CD8-positive, alpha-beta T cell (primary cell): ENCODE measurements at regions of chr9 and their contacts with region 1.

Region 1: DNA sequence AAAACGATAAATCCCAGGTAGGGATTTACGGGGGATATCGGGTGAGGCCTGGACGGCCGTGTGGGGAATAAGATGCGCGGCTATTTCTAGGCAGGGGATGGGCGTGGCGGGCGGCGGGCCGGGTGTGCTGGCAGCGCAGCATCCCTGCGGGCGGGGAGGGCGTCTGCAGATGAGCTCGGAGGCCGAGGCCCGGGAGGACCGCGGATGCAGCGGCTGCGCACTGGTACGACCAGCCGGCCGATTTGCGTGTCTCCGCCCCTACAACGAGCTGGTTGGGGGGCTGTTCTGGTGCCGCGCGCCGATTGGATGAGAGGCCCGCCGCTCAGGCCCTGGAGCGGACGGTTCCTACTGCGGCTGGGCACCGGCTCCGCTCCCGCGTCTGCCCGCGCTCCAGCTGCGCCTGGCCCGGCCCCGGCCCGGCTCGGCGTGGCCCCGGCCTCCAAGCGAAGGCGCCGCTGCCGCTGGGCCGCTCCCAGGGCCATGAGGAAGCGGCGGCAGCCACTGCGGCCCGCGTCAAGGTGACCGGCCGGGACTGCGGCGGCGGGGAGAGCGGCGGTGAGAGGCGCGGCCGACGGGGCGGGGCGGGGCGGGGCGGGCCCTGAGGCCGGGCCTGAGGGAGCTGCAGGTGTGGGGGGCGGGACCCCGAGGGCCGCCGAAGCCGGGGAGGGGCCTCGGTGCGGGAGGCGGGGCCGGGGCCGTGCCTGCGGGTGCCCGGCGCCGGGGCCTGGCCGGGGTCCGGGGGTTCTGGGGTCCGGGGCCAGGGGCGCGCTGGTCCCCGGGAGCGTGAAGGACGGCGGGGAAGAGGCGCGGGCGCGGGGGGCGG is at the start of gene RALGPS1:
- DNase-seq: peak; percentile 77 to 95 (median 86)
- ATAC-seq: peak; percentile 88
- H3K4me3 ChIP-seq: peak within 1 kb of the TSS; percentile 33 to 40
- H3K4me3 Mint-ChIP-seq: peak within 1 kb of the TSS; percentile 83
- H3K27ac ChIP-seq: no peak within 1 kb of the TSS
- H3K27ac Mint-ChIP-seq: no peak within 1 kb of the TSS
- H3K4me1 ChIP-seq: peaks cover 7% of the 10 kb centered on the region
- H3K4me1 Mint-ChIP-seq: peaks cover 8% of the 10 kb centered on the region
- H3K27me3 ChIP-seq: no peaks in the 10 kb centered on the region
- H3K27me3 Mint-ChIP-seq: no peaks in the 10 kb centered on the region
- CTCF ChIP-seq: no peak
- total RNA-seq, gene RALGPS1: 4.9 to 5.4 TPM

Region 2: DNA sequence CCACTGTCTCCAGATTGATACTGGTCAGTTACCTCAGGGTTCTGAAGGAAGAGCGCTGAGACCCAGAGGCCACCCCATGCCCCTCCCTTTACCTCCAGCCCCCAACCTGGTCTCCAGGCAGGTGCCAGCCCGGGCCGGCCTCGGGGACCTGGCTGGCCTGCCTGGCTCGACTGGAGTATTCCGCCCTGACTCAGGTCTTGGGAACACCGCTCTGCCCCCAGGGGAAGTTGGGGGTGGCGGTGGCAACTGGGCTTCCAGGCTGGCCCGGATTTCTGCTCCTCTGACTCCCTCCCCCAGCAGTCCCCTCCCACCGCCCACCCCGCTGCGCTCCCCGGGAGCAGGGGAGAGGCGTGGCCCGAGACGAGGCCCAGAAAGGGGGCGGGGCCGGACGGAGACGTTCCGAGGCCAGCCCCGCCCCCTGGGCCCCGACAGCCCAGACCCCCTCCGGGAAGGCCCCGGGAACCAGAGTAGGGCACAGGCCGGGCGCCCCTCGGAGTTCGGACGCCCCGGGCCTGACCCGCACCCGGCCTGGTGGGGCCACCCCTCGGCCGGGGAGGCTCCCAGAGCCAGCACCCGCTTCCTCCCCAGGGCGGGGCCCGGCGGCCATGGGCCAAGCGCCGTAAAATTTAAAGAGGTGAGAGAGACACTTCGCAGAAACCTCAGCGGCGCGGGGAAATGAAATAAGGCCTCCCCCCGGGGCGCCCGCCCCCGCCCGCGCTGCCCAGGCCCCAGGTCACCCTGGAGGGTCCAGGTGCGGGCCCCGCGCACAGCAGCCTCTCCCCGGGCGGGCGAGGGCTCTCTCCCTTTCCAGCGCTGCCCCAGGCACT is 192.2 kb before region 1 on chr9:
- CTCF ChIA-PET with region 1: no interaction called
- POLR2A ChIA-PET with region 1: no interaction called
- intact Hi-C with region 1: loop called in 1 of 2 experiments (anchors 10 kb)
- DNase-seq: peak; percentile 66 to 94 (median 90)
- ATAC-seq: peak; percentile 66
- H3K4me3 ChIP-seq: peak overlapping the region; percentile 65 to 92
- H3K4me3 Mint-ChIP-seq: peak overlapping the region; percentile 90
- H3K27ac ChIP-seq: peak overlapping the region; percentile 87 to 99
- H3K27ac Mint-ChIP-seq: peak overlapping the region; percentile 95
- H3K4me1 ChIP-seq: peaks cover 44% of the 10 kb centered on the region
- H3K4me1 Mint-ChIP-seq: peaks cover 53% of the 10 kb centered on the region
- H3K27me3 ChIP-seq: no peaks in the 10 kb centered on the region
- H3K27me3 Mint-ChIP-seq: no peaks in the 10 kb centered on the region
- CTCF ChIP-seq: no peak

Region 3: GRCh38 chr9:126804696-126805545 is 109.7 kb before region 1 on chr9 and contains the start of gene ZBTB43:
- CTCF ChIA-PET with region 1: no interaction called
- POLR2A ChIA-PET with region 1: interaction called, 3 read pairs
- intact Hi-C with region 1: loop called in 1 of 2 experiments (anchors 1 kb)
- DNase-seq: peak; percentile 97 to 99 (median 99)
- ATAC-seq: peak; percentile 82
- H3K4me3 ChIP-seq: peak within 1 kb of the TSS; percentile 83 to 85
- H3K4me3 Mint-ChIP-seq: peak within 1 kb of the TSS; percentile 98
- H3K27ac ChIP-seq: peak within 1 kb of the TSS; percentile 87 to 93
- H3K27ac Mint-ChIP-seq: peak within 1 kb of the TSS; percentile 99
- H3K4me1 ChIP-seq: peaks cover 32% of the 10 kb centered on the region
- H3K4me1 Mint-ChIP-seq: peaks cover 43% of the 10 kb centered on the region
- H3K27me3 ChIP-seq: no peaks in the 10 kb centered on the region
- H3K27me3 Mint-ChIP-seq: no peaks in the 10 kb centered on the region
- CTCF ChIP-seq: no peak
- total RNA-seq, gene ZBTB43: 55.7 to 65.0 TPM

Region 4: DNA sequence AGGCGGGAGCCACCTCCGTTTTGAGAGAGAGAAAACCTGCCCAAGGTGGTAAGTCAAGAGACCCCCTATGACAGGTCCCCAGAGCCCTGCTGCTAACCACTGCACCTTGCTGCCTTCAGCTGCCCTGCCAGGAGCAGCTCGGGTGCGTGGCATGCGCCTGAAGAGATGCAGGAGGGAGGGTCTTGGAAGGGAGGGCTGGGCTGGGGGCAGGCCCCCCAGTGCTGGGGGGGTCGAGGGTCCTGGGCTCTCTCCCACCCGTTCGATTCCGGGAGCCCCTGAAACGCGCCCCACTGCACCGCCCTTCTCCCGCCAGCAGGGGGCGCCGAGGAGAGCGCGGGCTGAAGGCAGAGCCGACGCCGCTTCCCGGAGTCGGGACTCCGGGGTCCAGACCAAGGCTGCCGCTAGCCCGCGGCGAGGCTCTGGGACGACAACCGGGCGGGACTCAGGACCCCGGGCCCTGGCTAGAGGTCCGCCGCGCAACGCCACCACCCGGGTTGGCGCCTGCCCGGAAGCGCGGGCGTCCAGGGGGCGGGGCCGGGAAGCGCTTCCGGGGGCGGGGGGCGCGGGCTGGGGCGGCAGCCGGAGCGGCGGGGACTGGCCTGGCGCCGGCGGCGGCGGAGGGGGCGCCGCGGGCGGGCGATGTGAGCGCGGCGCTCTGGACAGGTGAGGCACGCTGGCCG is 54.5 kb before region 1 on chr9 and contains the start of gene ZBTB34:
- CTCF ChIA-PET with region 1: interaction called, 4 read pairs
- POLR2A ChIA-PET with region 1: no interaction called
- intact Hi-C with region 1: loop called (anchors 1 to 2 kb)
- DNase-seq: peak; percentile 59 to 90 (median 76)
- ATAC-seq: peak; percentile 84
- H3K4me3 ChIP-seq: peak within 1 kb of the TSS; percentile 71 to 74
- H3K4me3 Mint-ChIP-seq: peak within 1 kb of the TSS; percentile 86
- H3K27ac ChIP-seq: peak within 1 kb of the TSS; percentile 57 to 76
- H3K27ac Mint-ChIP-seq: peak within 1 kb of the TSS; percentile 91
- H3K4me1 ChIP-seq: peaks cover 30% of the 10 kb centered on the region
- H3K4me1 Mint-ChIP-seq: peaks cover 30% of the 10 kb centered on the region
- H3K27me3 ChIP-seq: no peaks in the 10 kb centered on the region
- H3K27me3 Mint-ChIP-seq: peaks cover 2% of the 10 kb centered on the region
- CTCF ChIP-seq: peak; percentile 99
- total RNA-seq, gene ZBTB34: 3.0 to 3.3 TPM

Region 5: GRCh38 chr9:127035951-127036350 is 121.3 kb after region 1 on chr9:
- CTCF ChIA-PET with region 1: no interaction called
- POLR2A ChIA-PET with region 1: no interaction called
- intact Hi-C with region 1: no loop called
- DNase-seq: no peak
- ATAC-seq: no peak
- H3K4me3 ChIP-seq: no peak overlapping the region
- H3K4me3 Mint-ChIP-seq: no peak overlapping the region
- H3K27ac ChIP-seq: no peak overlapping the region
- H3K27ac Mint-ChIP-seq: no peak overlapping the region
- H3K4me1 ChIP-seq: no peaks in the 10 kb centered on the region
- H3K4me1 Mint-ChIP-seq: no peaks in the 10 kb centered on the region
- H3K27me3 ChIP-seq: no peaks in the 10 kb centered on the region
- H3K27me3 Mint-ChIP-seq: no peaks in the 10 kb centered on the region
- CTCF ChIP-seq: no peak

Region 6: GRCh38 chr9:127224178-127224882 is 309.7 kb after region 1 on chr9:
- CTCF ChIA-PET with region 1: no interaction called
- POLR2A ChIA-PET with region 1: no interaction called
- intact Hi-C with region 1: loop called in 1 of 2 experiments (anchors 1 kb)
- DNase-seq: peak; percentile 75 to 91 (median 89)
- ATAC-seq: peak; percentile 82
- H3K4me3 ChIP-seq: peak overlapping the region; percentile 66 to 72
- H3K4me3 Mint-ChIP-seq: peak overlapping the region; percentile 82
- H3K27ac ChIP-seq: peak overlapping the region in 1 of 2 experiments; percentile 53
- H3K27ac Mint-ChIP-seq: peak overlapping the region; percentile 77
- H3K4me1 ChIP-seq: peaks cover 33% of the 10 kb centered on the region
- H3K4me1 Mint-ChIP-seq: peaks cover 42% of the 10 kb centered on the region
- H3K27me3 ChIP-seq: no peaks in the 10 kb centered on the region
- H3K27me3 Mint-ChIP-seq: peaks cover 2% of the 10 kb centered on the region
- CTCF ChIP-seq: no peak

Region 7: GRCh38 chr9:127244609-127245601 is 330.2 kb after region 1 on chr9:
- CTCF ChIA-PET with region 1: no interaction called
- POLR2A ChIA-PET with region 1: no interaction called
- intact Hi-C with region 1: loop called in 1 of 2 experiments (anchors 1 kb)
- DNase-seq: peak; percentile 88 to 96 (median 94)
- ATAC-seq: peak; percentile 100
- H3K4me3 ChIP-seq: peak overlapping the region; percentile 57 to 76
- H3K4me3 Mint-ChIP-seq: peak overlapping the region; percentile 86
- H3K27ac ChIP-seq: peak overlapping the region in 1 of 2 experiments; percentile 12
- H3K27ac Mint-ChIP-seq: no peak overlapping the region
- H3K4me1 ChIP-seq: peaks cover 6% of the 10 kb centered on the region
- H3K4me1 Mint-ChIP-seq: peaks cover 15% of the 10 kb centered on the region
- H3K27me3 ChIP-seq: no peaks in the 10 kb centered on the region
- H3K27me3 Mint-ChIP-seq: peaks cover 7% of the 10 kb centered on the region
- CTCF ChIP-seq: no peak